Caco-2 (cell line): ENCODE measurements at regions of chr3 and their contacts with region 1.

Region 1: DNA sequence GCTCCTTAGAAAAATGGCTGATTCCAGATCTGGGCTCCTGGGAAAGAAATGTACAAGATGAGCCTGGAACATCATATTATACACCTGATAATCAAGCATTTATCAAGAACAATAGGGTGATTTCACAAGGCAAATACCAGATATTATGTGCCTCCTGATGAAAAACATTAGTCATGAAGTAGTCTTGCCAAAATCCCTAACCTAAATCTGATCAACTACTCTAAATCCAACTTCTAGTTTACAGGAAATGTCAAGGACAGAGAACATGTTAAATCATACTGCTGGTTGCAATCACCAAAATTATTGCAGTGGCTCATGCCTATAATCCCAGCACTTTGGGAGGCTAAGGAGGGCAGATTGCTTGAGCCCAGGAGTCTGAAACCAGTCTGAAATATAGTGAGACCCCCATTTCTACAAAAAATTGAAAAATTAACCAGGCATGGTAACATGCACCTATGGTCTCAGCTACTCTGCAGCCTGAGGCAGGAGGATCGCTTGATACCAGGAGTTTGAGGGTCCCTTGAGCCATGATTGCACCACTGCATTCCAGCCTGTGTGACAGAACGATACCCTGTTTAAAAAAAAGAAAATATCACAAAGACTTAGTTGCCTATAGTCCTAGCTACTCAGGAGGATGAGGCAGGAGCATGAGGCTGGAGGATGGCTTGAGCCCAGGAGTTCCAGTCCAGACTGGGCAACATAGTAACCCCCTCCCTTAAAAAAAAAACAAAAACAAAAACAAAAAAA is 34.9 kb upstream of the ATP13A3 start:
- DNase-seq: no peak
- H3K4me3 ChIP-seq: peak overlapping the region; percentile 42
- H3K4me3 Mint-ChIP-seq: peak overlapping the region; percentile 71
- H3K27ac Mint-ChIP-seq: peak overlapping the region; percentile 98
- H3K4me1 ChIP-seq: peaks cover 52% of the 10 kb centered on the region
- H3K4me1 Mint-ChIP-seq: peaks cover 23% of the 10 kb centered on the region
- H3K27me3 ChIP-seq: no peaks in the 10 kb centered on the region
- H3K27me3 Mint-ChIP-seq: no peaks in the 10 kb centered on the region
- CTCF ChIP-seq: no peak

Region 2: DNA sequence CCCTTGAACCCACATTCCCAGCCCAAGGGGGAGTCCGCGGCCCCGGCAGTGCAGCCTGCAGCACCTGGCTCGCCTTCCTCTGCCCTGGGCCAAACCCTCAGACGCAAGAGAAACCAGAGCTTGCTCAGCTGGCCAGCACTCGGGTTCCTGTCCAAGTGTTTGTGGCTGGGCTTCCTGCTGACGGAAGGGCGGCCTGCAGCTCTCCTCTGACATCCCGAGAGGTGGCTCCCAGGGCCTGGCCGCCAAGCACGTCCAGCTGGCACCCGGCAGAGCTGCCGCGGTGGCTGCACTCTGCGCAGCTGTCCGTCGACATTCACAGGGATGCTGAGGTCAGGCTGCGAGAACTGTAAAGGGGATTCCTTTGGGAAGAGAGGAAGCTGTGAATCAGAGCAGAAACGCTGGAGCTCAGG is 256.2 kb before region 1 on chr3:
- CTCF ChIA-PET with region 1: no interaction called
- POLR2A ChIA-PET with region 1: no interaction called
- intact Hi-C with region 1: no loop called
- DNase-seq: peak in 1 of 2 experiments; percentile 14
- H3K4me3 ChIP-seq: no peak overlapping the region
- H3K4me3 Mint-ChIP-seq: no peak overlapping the region
- H3K27ac Mint-ChIP-seq: no peak overlapping the region
- H3K4me1 ChIP-seq: peaks cover 2% of the 10 kb centered on the region
- H3K4me1 Mint-ChIP-seq: no peaks in the 10 kb centered on the region
- H3K27me3 ChIP-seq: no peaks in the 10 kb centered on the region
- H3K27me3 Mint-ChIP-seq: no peaks in the 10 kb centered on the region
- CTCF ChIP-seq: no peak

Region 3: GRCh38 chr3:194447161-194447560 is 74.5 kb before region 1 on chr3:
- CTCF ChIA-PET with region 1: no interaction called
- POLR2A ChIA-PET with region 1: no interaction called
- intact Hi-C with region 1: no loop called
- DNase-seq: peak; percentile 59 to 61
- H3K4me3 ChIP-seq: no peak overlapping the region
- H3K4me3 Mint-ChIP-seq: peak overlapping the region; percentile 27
- H3K27ac Mint-ChIP-seq: peak overlapping the region; percentile 61
- H3K4me1 ChIP-seq: peaks cover 36% of the 10 kb centered on the region
- H3K4me1 Mint-ChIP-seq: peaks cover 47% of the 10 kb centered on the region
- H3K27me3 ChIP-seq: no peaks in the 10 kb centered on the region
- H3K27me3 Mint-ChIP-seq: no peaks in the 10 kb centered on the region
- CTCF ChIP-seq: no peak

Region 4: DNA sequence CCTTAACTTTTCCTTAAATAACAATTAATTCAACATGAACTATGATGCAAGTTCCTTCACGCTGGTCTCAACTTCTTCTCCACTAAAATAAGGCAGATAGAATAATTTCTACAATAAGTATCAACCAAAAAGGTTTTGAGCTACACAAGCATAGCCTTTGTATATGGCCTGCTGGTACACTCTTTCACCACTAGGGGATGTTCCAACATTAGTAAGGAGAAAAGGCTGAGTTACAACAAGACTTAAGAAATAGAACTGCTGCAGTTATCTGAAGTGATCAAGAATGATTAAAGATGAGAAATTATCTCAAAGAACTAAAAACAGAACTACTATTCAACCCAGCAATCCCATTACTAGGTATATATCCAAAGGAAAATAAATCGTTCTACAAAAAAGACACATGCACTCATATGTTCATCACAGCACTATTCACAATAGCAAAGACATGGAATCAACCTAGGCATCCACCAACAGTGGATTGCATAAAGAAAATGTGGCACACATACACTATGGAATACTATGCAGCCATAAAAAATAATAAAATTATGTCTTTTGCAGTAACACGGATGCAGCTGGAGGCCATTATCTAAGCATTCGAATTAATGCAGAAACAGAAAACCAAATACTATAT is 49.3 kb before region 1 on chr3:
- CTCF ChIA-PET with region 1: interaction called, 12 read pairs
- POLR2A ChIA-PET with region 1: no interaction called
- intact Hi-C with region 1: loop called (anchors 1 kb)
- DNase-seq: peak in 1 of 2 experiments; percentile 55
- H3K4me3 ChIP-seq: no peak overlapping the region
- H3K4me3 Mint-ChIP-seq: no peak overlapping the region
- H3K27ac Mint-ChIP-seq: no peak overlapping the region
- H3K4me1 ChIP-seq: peaks cover 7% of the 10 kb centered on the region
- H3K4me1 Mint-ChIP-seq: no peaks in the 10 kb centered on the region
- H3K27me3 ChIP-seq: no peaks in the 10 kb centered on the region
- H3K27me3 Mint-ChIP-seq: no peaks in the 10 kb centered on the region
- CTCF ChIP-seq: peak; percentile 86 to 97

Region 5: GRCh38 chr3:194536871-194537637 is 15.4 kb after region 1 on chr3:
- CTCF ChIA-PET with region 1: interaction called, 10 read pairs
- POLR2A ChIA-PET with region 1: interaction called, 9 read pairs
- intact Hi-C with region 1: loop called (anchors 1 kb)
- DNase-seq: peak; percentile 83 to 85
- H3K4me3 ChIP-seq: no peak overlapping the region
- H3K4me3 Mint-ChIP-seq: peak overlapping the region; percentile 50
- H3K27ac Mint-ChIP-seq: peak overlapping the region; percentile 89
- H3K4me1 ChIP-seq: peaks cover 41% of the 10 kb centered on the region
- H3K4me1 Mint-ChIP-seq: peaks cover 26% of the 10 kb centered on the region
- H3K27me3 ChIP-seq: no peaks in the 10 kb centered on the region
- H3K27me3 Mint-ChIP-seq: no peaks in the 10 kb centered on the region
- CTCF ChIP-seq: no peak

Region 6: GRCh38 chr3:194573691-194574437 is 52.2 kb after region 1 on chr3:
- CTCF ChIA-PET with region 1: interaction called, 7 read pairs
- POLR2A ChIA-PET with region 1: interaction called, 8 read pairs
- intact Hi-C with region 1: loop called (anchors 1 kb)
- DNase-seq: peak; percentile 55 to 62
- H3K4me3 ChIP-seq: no peak overlapping the region
- H3K4me3 Mint-ChIP-seq: no peak overlapping the region
- H3K27ac Mint-ChIP-seq: peak overlapping the region; percentile 98
- H3K4me1 ChIP-seq: peaks cover 54% of the 10 kb centered on the region
- H3K4me1 Mint-ChIP-seq: peaks cover 51% of the 10 kb centered on the region
- H3K27me3 ChIP-seq: no peaks in the 10 kb centered on the region
- H3K27me3 Mint-ChIP-seq: no peaks in the 10 kb centered on the region
- CTCF ChIP-seq: peak; percentile 62 to 69

Region 7: DNA sequence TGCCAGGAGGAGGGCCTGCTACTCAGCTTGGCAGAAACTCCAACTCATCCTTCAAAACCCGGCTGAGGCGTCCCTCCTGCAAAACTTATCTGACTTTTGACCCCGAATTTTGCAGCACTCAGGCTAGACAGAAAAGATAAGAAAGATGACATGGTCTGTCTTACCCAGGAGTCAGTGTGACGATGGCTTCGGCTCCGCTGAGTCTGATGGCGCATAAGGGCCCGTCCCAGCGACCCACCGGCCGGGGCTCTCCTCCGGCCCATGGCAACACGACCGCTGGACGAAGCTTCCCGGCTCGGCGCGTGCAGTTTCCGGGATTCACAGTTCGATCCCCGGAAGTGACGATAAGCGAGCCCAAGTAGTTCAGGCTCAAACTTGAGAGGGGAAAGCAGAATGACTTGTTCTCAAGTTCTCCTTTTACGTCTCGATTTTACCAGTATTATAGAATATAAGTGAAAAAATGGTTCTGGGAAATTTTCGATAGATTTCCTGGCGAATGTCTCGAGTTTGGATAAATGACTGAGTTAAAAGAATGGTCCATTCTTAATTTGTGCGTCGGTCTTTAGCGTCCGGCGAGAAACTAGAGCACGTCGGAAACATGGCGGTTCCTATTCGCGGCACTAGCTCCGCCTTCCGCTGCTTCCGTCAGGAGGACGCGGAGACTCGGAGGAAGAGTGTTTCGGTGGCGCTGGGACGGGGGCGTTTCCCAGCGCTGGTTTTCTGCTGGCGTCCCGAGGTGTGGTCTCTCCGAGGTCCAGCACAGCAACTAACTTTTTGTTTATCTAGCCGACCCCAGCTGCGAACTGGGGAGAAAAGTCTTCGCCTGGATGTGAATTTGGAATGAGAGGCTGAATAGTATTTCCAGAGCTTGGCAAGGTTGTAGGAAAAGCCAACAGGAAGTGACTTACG is 150.5 kb after region 1 on chr3 and contains the start of gene LSG1:
- CTCF ChIA-PET with region 1: no interaction called
- POLR2A ChIA-PET with region 1: no interaction called
- intact Hi-C with region 1: no loop called
- DNase-seq: peak; percentile 91 to 92
- H3K4me3 ChIP-seq: peak within 1 kb of the TSS; percentile 88
- H3K4me3 Mint-ChIP-seq: peak within 1 kb of the TSS; percentile 83
- H3K27ac Mint-ChIP-seq: peak within 1 kb of the TSS; percentile 97
- H3K4me1 ChIP-seq: peaks cover 9% of the 10 kb centered on the region
- H3K4me1 Mint-ChIP-seq: peaks cover 5% of the 10 kb centered on the region
- H3K27me3 ChIP-seq: no peaks in the 10 kb centered on the region
- H3K27me3 Mint-ChIP-seq: no peaks in the 10 kb centered on the region
- CTCF ChIP-seq: peak in 1 of 2 experiments; percentile 9
- total RNA-seq, gene LSG1: 48.0 and 55.0 TPM in 2 replicates